AG04449 (cell line): ENCODE measurements at regions of chr7 and their contacts with region 1.

Region 1: DNA sequence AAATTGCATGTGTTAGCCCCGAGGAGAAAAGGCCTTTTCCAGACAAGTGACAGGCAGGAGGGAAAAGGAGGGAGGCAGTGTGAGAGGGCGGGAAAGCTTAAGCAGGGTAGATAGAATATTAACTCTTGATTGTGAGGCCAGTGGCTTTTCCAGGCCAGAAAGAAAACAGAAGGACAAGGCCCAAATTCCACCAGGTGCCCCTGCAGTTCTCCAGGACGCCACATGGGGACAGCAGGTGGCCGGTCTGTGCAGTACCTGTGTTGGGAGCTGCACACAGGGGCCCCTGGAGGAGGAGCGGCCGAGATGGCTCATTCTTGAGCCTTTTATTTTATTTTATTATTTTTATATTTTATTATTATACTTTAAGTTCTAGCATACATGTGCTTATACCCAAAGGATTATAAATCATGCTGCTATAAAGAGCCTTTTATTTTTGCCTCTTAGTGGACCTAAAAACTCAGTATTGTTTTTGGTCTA is 141.3 kb upstream of the KLF14 start:
- DNase-seq: no peak
- H3K4me3 ChIP-seq: no peak overlapping the region
- CTCF ChIP-seq: peak; percentile 85

Region 2: GRCh38 chr7:130891254-130892094 is 16.2 kb after region 1 on chr7:
- CTCF ChIA-PET with region 1: interaction called, 22 read pairs
- POLR2A ChIA-PET with region 1: interaction called, 3 read pairs
- DNase-seq: peak; percentile 66
- H3K4me3 ChIP-seq: peak overlapping the region; percentile 37; the same call in 1 of the 2 replicates
- CTCF ChIP-seq: no peak